Endothelial cell of umbilical vein (primary cell): ENCODE measurements at regions of chr5 and their contacts with region 1.

Region 1: GRCh38 chr5:113678924-113679575 is 165.6 kb downstream of the YTHDC2 start:
- DNase-seq: peak; percentile 55
- H3K4me3 ChIP-seq: no peak overlapping the region
- H3K27ac ChIP-seq: no peak overlapping the region
- H3K4me1 ChIP-seq: no peaks in the 10 kb centered on the region
- H3K27me3 ChIP-seq: peaks cover 0 to 2% of the 10 kb centered on the region in 2 experiments
- CTCF ChIP-seq: peak; percentile 58 to 64
- POLR2A ChIP-seq: no peak

Region 2: GRCh38 chr5:113612060-113612496 is 67.0 kb before region 1 on chr5:
- CTCF ChIA-PET with region 1: interaction called, 24 read pairs
- POLR2A ChIA-PET with region 1: no interaction called
- dilution Hi-C with region 1: no loop called
- intact Hi-C with region 1: no loop called
- DNase-seq: peak; percentile 41
- H3K4me3 ChIP-seq: no peak overlapping the region
- H3K27ac ChIP-seq: no peak overlapping the region
- H3K4me1 ChIP-seq: peaks cover 7% of the 10 kb centered on the region
- H3K27me3 ChIP-seq: no peaks in the 10 kb centered on the region
- CTCF ChIP-seq: peak; percentile 20 to 35
- POLR2A ChIP-seq: no peak

Region 3: GRCh38 chr5:113652161-113652560 is 26.9 kb before region 1 on chr5:
- CTCF ChIA-PET with region 1: no interaction called
- POLR2A ChIA-PET with region 1: no interaction called
- dilution Hi-C with region 1: no loop called
- intact Hi-C with region 1: no loop called
- DNase-seq: no peak
- H3K4me3 ChIP-seq: no peak overlapping the region
- H3K27ac ChIP-seq: no peak overlapping the region
- H3K4me1 ChIP-seq: no peaks in the 10 kb centered on the region
- H3K27me3 ChIP-seq: no peaks in the 10 kb centered on the region
- CTCF ChIP-seq: no peak
- POLR2A ChIP-seq: no peak

Region 4: GRCh38 chr5:114101153-114101552 is 422.1 kb after region 1 on chr5:
- CTCF ChIA-PET with region 1: interaction called, 3 read pairs
- POLR2A ChIA-PET with region 1: no interaction called
- dilution Hi-C with region 1: no loop called
- intact Hi-C with region 1: loop called (anchors 2 kb)
- DNase-seq: peak; percentile 37
- H3K4me3 ChIP-seq: no peak overlapping the region
- H3K27ac ChIP-seq: no peak overlapping the region
- H3K4me1 ChIP-seq: no peaks in the 10 kb centered on the region
- H3K27me3 ChIP-seq: no peaks in the 10 kb centered on the region
- CTCF ChIP-seq: peak; percentile 42 to 45
- POLR2A ChIP-seq: no peak

Region 5: GRCh38 chr5:114305402-114306211 is 626.6 kb after region 1 on chr5:
- CTCF ChIA-PET with region 1: interaction called, 3 read pairs
- POLR2A ChIA-PET with region 1: no interaction called
- dilution Hi-C with region 1: no loop called
- intact Hi-C with region 1: loop called (anchors 1 kb)
- DNase-seq: peak; percentile 41
- H3K4me3 ChIP-seq: no peak overlapping the region
- H3K27ac ChIP-seq: no peak overlapping the region
- H3K4me1 ChIP-seq: no peaks in the 10 kb centered on the region
- H3K27me3 ChIP-seq: peaks cover 4 to 5% of the 10 kb centered on the region in 2 experiments
- CTCF ChIP-seq: peak in 1 of 2 donors; percentile 32
- POLR2A ChIP-seq: no peak

Region 6: GRCh38 chr5:114449860-114450421 is 770.9 kb after region 1 on chr5:
- CTCF ChIA-PET with region 1: interaction called, 132 read pairs
- POLR2A ChIA-PET with region 1: no interaction called
- dilution Hi-C with region 1: no loop called
- intact Hi-C with region 1: loop called (anchors 1 kb)
- DNase-seq: peak; percentile 63
- H3K4me3 ChIP-seq: no peak overlapping the region
- H3K27ac ChIP-seq: no peak overlapping the region
- H3K4me1 ChIP-seq: no peaks in the 10 kb centered on the region
- H3K27me3 ChIP-seq: no peaks in the 10 kb centered on the region
- CTCF ChIP-seq: peak; percentile 81 to 85
- POLR2A ChIP-seq: no peak

Region 7: GRCh38 chr5:115246361-115246991 is 1567.4 kb after region 1 on chr5:
- CTCF ChIA-PET with region 1: interaction called, 3 read pairs
- POLR2A ChIA-PET with region 1: no interaction called
- dilution Hi-C with region 1: no loop called
- intact Hi-C with region 1: loop called (anchors 1 kb)
- DNase-seq: peak; percentile 49
- H3K4me3 ChIP-seq: no peak overlapping the region
- H3K27ac ChIP-seq: no peak overlapping the region
- H3K4me1 ChIP-seq: no peaks in the 10 kb centered on the region
- H3K27me3 ChIP-seq: no peaks in the 10 kb centered on the region
- CTCF ChIP-seq: peak; percentile 34 to 37
- POLR2A ChIP-seq: no peak